GM10248 (cell line): ENCODE measurements at regions of chr1 and their contacts with region 1.

Region 1: GRCh38 chr1:53393325-53393792 is 65.5 kb upstream of the LRP8 start:
- DNase-seq: peak; percentile 86
- CTCF ChIP-seq: peak; percentile 92

Region 2: DNA sequence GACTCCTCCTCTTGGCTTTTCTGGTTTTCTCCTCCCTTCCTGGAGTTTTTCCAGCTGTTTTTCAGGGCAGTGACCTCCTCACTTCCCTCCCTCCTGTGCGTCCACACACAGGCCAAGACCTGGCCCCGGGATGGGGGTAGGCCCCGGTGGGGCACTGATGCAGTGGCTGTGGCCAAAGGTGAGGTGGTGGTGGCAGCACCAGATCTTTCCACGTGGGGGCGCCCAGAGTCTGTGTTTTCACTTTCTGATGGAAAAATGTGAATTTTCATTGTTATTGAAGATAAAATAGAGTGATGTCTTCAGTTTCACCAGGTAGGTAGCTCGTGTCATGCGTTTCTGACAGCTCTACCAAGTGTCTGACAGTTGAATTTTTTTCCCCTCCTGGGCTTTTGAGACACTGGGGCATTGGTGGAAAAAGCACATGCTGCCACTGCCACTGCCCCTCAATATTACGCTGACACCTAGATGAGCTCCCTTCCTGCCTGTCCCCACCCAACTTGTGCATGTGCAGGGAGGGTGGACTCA is 115.1 kb before region 1 on chr1:
- CTCF ChIA-PET with region 1: interaction called, 338 read pairs
- POLR2A ChIA-PET with region 1: interaction called, 4 read pairs
- DNase-seq: peak; percentile 83
- CTCF ChIP-seq: peak; percentile 90

Region 3: GRCh38 chr1:53294567-53294966 is 98.8 kb before region 1 on chr1:
- CTCF ChIA-PET with region 1: interaction called, 38 read pairs
- POLR2A ChIA-PET with region 1: no interaction called
- DNase-seq: peak; percentile 64
- CTCF ChIP-seq: no peak

Region 4: GRCh38 chr1:53367503-53368304 is 25.7 kb before region 1 on chr1:
- CTCF ChIA-PET with region 1: interaction called, 10 read pairs
- POLR2A ChIA-PET with region 1: no interaction called
- DNase-seq: peak; percentile 93
- CTCF ChIP-seq: no peak

Region 5: GRCh38 chr1:53381790-53382401 is 11.5 kb before region 1 on chr1:
- CTCF ChIA-PET with region 1: interaction called, 22 read pairs
- POLR2A ChIA-PET with region 1: no interaction called
- DNase-seq: no peak
- CTCF ChIP-seq: no peak

Region 6: DNA sequence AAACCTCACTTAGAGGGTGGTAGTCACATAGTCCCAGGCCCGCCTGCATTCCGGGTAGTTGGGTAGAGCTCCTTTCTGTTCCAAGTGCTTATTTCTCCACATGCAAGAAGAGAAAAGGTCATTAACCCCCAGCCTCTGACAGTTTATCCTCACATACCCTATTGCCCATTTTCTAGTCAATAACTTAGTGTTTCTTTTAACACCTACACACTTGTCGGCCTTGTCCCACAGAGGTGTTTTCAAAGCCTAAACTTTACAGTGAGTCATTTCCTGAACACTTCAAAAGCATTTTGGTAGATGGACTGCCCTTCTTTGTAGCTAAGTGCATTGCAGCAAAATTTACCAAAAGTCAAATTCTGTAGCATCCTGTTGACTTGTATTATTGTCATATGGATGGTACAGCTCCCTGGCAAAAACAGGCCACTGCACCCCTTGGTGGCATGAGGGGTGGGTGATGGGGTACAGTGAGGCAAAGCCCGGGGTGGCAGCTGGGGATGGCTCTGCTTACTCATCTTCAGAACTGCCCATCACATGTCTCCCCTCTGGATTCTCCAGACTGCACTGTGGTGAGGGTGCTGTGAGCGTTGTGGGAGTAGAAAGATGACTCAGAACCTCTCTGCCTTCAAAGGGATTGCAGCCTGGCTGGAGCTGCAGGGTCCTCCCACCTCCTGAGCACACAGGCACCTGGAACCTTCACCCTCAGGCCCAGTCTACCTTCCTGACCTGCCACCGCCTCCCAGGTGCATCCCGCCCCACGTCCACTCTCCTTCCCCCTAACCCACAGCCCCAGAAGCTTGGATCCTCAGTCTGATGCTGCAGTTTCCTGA is 20.0 kb after region 1 on chr1:
- CTCF ChIA-PET with region 1: interaction called, 42 read pairs
- POLR2A ChIA-PET with region 1: no interaction called
- DNase-seq: peak; percentile 48
- CTCF ChIP-seq: no peak

Region 7: DNA sequence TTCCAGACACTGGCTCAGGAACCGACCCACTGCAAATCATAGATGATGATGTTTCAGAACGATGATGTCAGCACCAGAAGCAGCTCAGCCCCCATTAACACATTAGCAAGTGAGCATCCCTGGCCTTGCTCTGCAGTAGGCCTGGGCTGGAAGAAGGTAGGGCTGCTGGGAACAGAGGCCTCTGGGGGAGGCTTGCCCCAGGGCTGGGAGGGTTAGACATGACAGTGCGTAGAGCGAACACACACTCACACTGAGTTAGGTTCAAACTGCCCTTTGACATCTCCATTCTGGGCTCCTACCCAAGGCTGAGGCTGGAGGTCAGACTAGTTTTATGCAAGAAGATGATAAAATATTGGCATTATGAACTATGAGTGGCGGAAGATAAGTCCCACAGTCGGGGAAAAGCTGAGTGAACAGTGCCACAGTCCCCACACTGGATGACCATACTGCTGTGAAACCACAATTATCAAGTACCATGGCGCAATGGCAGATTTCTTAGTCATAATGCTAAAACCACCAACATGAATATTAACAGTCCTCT is 156.9 kb after region 1 on chr1:
- CTCF ChIA-PET with region 1: no interaction called
- POLR2A ChIA-PET with region 1: no interaction called
- DNase-seq: no peak
- CTCF ChIP-seq: no peak

Region 8: GRCh38 chr1:53615101-53615500 is 221.7 kb after region 1 on chr1:
- CTCF ChIA-PET with region 1: no interaction called
- POLR2A ChIA-PET with region 1: no interaction called
- DNase-seq: no peak
- CTCF ChIP-seq: no peak

Region 9: GRCh38 chr1:53669637-53670191 is 276.4 kb after region 1 on chr1:
- CTCF ChIA-PET with region 1: no interaction called
- POLR2A ChIA-PET with region 1: no interaction called
- DNase-seq: no peak
- CTCF ChIP-seq: no peak